Activated CD4-positive, alpha-beta memory T cell treated with anti-CD3 and anti-CD28 coated beads, Interleukin-2, amount 10 ng/mL, durations not matched to agents 7 days and 5 days (primary cell): ENCODE measurements at regions of chr4 and their contacts with region 1.

Region 1: DNA sequence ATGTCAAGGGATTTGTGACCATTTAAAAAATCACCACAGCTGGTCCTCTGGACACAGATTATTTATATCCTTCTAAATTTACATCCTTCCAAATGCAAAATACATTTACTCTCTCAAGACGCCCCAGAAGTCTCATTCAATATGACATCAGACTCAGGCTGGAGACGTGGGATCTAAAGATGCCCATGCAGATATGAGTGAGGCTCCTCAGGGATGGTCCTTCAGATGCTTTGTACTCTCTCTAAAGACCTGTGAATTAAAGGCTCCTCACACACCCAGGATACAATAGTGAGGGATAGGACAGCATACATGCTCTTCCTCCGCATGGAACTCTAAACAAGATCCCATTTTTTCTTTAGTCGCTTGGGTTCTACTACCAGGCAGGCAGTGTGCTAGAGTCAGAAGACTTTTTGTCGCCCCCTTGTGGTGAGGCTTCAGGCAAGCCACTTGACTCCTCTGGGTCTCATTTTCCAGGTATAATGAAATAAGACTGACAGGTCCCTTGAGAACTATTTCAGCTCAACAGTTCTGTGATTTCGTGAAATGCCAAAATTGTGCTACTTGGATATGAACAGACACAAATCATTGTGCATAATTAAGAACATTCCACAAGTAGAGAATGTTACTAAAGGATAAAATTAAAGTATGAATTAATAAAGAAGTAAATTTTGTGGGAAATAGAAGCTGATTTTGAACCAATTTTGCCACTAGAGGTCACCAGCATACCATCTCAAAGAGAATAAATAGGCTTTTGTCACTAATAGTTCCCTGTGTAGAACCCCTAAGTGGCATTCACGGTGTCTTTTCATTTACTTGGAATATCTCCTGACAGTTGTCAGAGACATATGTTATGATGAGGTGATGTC is 13.7 kb upstream of the SCOC start:
- DNase-seq: peak; percentile 78
- H3K4me3 Mint-ChIP-seq: no peak overlapping the region
- H3K27ac Mint-ChIP-seq: no peak overlapping the region
- H3K4me1 Mint-ChIP-seq: no peaks in the 10 kb centered on the region
- H3K27me3 Mint-ChIP-seq: peaks cover 11% of the 10 kb centered on the region

Region 2: DNA sequence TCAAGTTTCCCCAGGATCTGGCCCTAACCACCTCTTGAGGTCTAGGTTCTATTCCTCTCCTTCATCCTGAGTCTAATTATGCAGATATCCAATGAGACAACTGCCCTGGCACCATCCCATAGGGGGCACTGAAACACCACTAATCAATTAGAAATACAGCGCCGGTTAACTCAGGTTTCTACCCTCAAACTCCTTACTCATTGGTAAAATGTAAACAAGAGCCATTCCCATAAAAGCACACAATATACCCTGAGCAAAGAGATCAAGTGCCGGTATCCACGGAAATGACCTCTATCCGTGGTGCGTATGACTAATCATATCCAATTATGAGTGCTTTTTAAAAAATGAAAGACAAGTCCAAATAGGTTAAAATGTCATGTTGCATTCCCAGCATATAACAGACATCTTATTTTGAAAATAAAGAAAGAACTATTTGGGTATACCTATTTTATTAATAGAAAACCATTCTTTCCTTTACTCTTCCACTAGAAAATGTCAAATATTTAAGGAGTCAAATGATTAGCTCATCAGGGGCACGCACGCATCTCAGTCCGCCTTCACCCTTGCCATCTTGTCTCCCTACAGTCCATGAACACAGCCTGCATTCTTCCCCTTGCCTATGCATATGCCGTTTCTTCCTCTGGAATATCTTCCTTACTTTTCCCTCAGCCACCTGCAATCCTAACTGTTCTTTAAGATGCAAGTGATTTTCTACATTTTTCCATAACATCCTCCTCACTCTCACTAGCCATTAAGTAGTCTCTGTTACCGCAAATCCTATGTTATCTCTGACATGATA is 346.9 kb before region 1 on chr4:
- CTCF ChIA-PET with region 1: interaction called, 27 read pairs
- POLR2A ChIA-PET with region 1: no interaction called
- DNase-seq: peak; percentile 60
- H3K4me3 Mint-ChIP-seq: no peak overlapping the region
- H3K27ac Mint-ChIP-seq: no peak overlapping the region
- H3K4me1 Mint-ChIP-seq: peaks cover 8% of the 10 kb centered on the region
- H3K27me3 Mint-ChIP-seq: peaks cover 34% of the 10 kb centered on the region

Region 3: GRCh38 chr4:140330311-140330900 is 29.4 kb before region 1 on chr4:
- CTCF ChIA-PET with region 1: interaction called, 19 read pairs
- POLR2A ChIA-PET with region 1: no interaction called
- DNase-seq: no peak
- H3K4me3 Mint-ChIP-seq: no peak overlapping the region
- H3K27ac Mint-ChIP-seq: no peak overlapping the region
- H3K4me1 Mint-ChIP-seq: peaks cover 5% of the 10 kb centered on the region
- H3K27me3 Mint-ChIP-seq: peaks cover 26% of the 10 kb centered on the region

Region 4: DNA sequence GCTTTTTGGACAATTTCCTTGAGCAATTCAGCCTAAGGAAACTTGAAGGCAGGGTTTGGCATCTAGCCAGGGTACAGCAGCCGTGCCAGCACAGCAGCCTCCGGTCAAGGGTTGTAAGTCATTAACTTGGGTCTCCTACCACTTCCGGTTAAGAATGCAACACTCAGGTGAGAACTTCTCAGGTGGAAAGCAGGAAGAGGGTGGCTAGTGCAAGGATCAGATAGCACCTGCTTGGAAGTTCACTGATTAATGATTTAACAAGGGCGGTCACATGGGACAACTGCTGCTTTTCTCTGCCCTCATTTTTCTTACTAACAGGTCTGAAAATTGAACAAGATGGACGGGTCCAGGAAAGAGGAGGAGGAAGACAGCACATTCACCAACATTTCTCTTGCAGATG is 16.5 kb before region 1 on chr4:
- CTCF ChIA-PET with region 1: interaction called, 13 read pairs
- POLR2A ChIA-PET with region 1: no interaction called
- DNase-seq: no peak
- H3K4me3 Mint-ChIP-seq: no peak overlapping the region
- H3K27ac Mint-ChIP-seq: no peak overlapping the region
- H3K4me1 Mint-ChIP-seq: no peaks in the 10 kb centered on the region
- H3K27me3 Mint-ChIP-seq: peaks cover 27% of the 10 kb centered on the region

Region 5: DNA sequence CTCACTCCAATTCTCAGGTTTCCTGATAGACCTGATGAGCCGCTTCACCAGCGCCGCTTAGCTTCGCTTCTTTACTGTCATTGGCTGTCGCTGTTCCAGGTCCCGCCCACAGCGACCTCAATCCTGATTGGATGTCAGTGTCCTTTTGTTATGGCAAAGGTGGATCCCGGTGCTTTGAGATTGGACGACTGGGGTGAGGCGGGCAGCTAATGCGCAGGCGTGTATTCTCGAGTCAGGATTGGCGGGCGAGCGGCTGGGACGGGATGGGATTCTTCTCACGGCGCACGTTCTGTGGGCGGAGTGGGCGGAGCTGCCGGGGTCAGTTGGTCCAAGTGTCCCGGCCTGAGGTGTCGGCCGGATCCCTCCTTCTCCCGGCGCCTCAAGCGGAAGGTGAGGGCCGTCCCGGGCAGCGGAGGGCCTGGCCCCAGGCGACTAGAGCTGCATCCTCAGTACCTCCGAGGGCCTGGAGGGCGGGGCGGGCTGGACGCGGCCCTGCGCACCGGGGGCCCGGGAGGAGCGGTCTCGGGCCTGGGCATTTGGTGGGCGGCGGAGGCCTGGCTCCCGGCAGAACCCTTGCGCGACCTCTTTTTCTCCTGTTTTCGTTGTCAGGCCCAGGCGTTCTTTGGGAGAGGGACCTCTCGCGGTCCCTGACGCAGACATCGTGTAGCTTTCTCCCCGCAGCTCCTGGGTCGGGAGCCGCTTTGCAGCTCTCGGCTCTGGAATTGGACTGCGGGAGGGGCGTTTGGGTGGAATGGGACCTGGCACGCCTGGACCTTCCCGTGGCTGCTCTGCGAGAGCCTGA is 13.7 kb after region 1 on chr4 and contains the start of gene SCOC:
- CTCF ChIA-PET with region 1: interaction called, 74 read pairs
- POLR2A ChIA-PET with region 1: interaction called, 3 read pairs
- DNase-seq: peak; percentile 98
- H3K4me3 Mint-ChIP-seq: no peak within 1 kb of the TSS
- H3K27ac Mint-ChIP-seq: peak within 1 kb of the TSS; percentile 18
- H3K4me1 Mint-ChIP-seq: peaks cover 19% of the 10 kb centered on the region
- H3K27me3 Mint-ChIP-seq: peaks cover 2% of the 10 kb centered on the region
- total RNA-seq, gene SCOC: 24.5 to 25.0 TPM

Region 6: DNA sequence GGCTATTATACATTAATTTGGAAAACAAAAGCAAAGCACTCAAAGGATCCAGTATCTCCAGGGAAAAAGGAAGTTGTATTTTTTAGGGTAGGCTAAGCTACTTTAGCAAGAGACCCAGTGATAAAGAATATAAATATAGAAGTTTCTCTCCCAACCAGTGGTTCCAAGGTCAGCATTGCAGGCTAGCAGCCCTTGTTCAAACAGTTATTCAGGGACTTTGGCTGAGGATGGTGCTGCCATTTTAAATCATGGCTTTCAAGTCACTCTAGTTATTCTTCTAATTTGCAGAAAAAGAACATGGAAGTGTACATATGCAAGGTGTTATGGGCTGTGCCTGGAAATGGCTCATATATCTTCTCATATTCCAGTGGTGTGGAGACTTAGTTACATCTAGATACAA is 22.9 kb after region 1 on chr4:
- CTCF ChIA-PET with region 1: interaction called, 22 read pairs
- POLR2A ChIA-PET with region 1: no interaction called
- DNase-seq: no peak
- H3K4me3 Mint-ChIP-seq: no peak overlapping the region
- H3K27ac Mint-ChIP-seq: no peak overlapping the region
- H3K4me1 Mint-ChIP-seq: no peaks in the 10 kb centered on the region
- H3K27me3 Mint-ChIP-seq: peaks cover 5% of the 10 kb centered on the region

Region 7: DNA sequence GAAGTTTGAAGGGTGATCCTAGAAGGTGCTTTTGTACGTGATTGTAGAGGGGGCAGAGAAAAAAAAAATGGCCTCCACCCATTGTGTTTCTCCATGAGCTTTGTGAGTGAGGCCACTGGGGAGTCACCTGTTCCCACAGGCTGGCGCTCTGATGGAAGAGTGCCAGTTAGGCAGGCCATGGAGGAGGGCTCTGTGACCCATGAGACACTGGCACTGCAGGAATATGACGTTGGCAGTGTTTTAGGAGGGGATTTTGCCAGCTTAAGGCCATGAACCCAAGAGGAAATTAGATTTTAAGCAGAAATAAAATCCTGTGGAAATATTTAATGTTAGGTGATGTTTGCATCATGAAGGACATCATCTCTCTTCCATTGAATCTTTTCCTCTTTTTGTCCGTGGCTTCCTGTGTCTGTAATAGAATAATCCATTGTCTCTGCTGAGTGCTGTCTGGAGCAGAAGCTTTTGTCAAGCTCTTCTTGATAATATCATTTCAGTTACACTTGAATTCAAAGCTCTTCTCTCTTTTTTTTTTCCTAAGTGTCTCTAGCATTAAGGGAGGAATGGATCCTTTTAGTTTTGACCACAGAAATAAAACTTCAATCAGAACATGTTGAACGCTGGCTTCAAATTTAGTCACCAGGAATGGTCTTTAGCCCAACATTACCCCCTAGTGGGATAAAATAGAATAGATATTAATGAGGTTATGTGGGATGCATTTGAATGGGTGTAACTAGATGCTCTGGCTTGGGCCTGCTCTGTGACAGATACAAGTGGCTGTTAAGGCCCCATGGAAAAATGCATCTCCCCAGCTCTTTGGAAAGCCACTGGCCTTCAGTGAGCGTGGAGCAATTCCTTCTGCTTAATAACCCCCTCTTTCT is 250.0 kb after region 1 on chr4:
- CTCF ChIA-PET with region 1: interaction called, 28 read pairs
- POLR2A ChIA-PET with region 1: no interaction called
- DNase-seq: no peak
- H3K4me3 Mint-ChIP-seq: no peak overlapping the region
- H3K27ac Mint-ChIP-seq: no peak overlapping the region
- H3K4me1 Mint-ChIP-seq: no peaks in the 10 kb centered on the region
- H3K27me3 Mint-ChIP-seq: peaks cover 8% of the 10 kb centered on the region